Activated naive CD4-positive, alpha-beta T cell treated with anti-CD3 and anti-CD28 coated beads for 36 hours (primary cell): ENCODE measurements at regions of chr4 and their contacts with region 1.

Region 1: GRCh38 chr4:83334425-83335241 is at the start of gene HPSE:
- DNase-seq: peak; percentile 81
- H3K4me3 Mint-ChIP-seq: peak within 1 kb of the TSS; percentile 84
- H3K27ac Mint-ChIP-seq: peak within 1 kb of the TSS; percentile 51
- H3K4me1 Mint-ChIP-seq: peaks cover 16% of the 10 kb centered on the region
- H3K27me3 Mint-ChIP-seq: peaks cover under 1% of the 10 kb centered on the region
- total RNA-seq, gene HPSE: 13.5 to 16.1 TPM

Region 2: GRCh38 chr4:83212041-83212851 is 122.4 kb before region 1 on chr4:
- CTCF ChIA-PET with region 1: no interaction called
- intact Hi-C with region 1: loop called (anchors 1 kb)
- DNase-seq: peak; percentile 72
- H3K4me3 Mint-ChIP-seq: no peak overlapping the region
- H3K27ac Mint-ChIP-seq: peak overlapping the region; percentile 65
- H3K4me1 Mint-ChIP-seq: peaks cover 54% of the 10 kb centered on the region
- H3K27me3 Mint-ChIP-seq: no peaks in the 10 kb centered on the region

Region 3: DNA sequence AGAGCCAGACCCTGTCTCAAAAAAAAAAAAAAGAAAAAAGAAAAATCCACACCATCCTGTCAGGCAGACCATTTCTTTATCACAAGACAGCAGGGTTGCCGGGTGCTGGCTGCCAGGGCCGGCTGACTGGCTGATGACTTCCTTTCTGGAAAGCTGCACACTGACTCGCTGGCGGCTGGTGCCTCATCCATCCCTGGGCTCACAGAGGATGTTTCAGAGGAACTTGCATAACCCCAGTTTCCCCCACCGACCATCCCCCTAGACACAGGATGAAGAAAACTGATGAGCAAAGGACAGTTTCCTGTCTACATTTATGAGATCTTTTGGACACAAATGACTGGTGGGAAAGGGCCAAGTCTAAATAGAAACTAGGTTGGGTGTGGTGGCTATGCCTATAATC is 14.1 kb before region 1 on chr4:
- CTCF ChIA-PET with region 1: no interaction called
- intact Hi-C with region 1: loop called (anchors 1 kb)
- DNase-seq: peak; percentile 68
- H3K4me3 Mint-ChIP-seq: no peak overlapping the region
- H3K27ac Mint-ChIP-seq: peak overlapping the region; percentile 10
- H3K4me1 Mint-ChIP-seq: peaks cover 6% of the 10 kb centered on the region
- H3K27me3 Mint-ChIP-seq: no peaks in the 10 kb centered on the region

Region 4: GRCh38 chr4:83348074-83348473 is 13.4 kb after region 1 on chr4:
- CTCF ChIA-PET with region 1: no interaction called
- intact Hi-C with region 1: loop called (anchors 1 kb)
- DNase-seq: no peak
- H3K4me3 Mint-ChIP-seq: no peak overlapping the region
- H3K27ac Mint-ChIP-seq: no peak overlapping the region
- H3K4me1 Mint-ChIP-seq: peaks cover 20% of the 10 kb centered on the region
- H3K27me3 Mint-ChIP-seq: no peaks in the 10 kb centered on the region

Region 5: GRCh38 chr4:83387753-83388676 is 53.4 kb after region 1 on chr4:
- CTCF ChIA-PET with region 1: no interaction called
- intact Hi-C with region 1: loop called (anchors 2 kb)
- DNase-seq: peak; percentile 52
- H3K4me3 Mint-ChIP-seq: no peak overlapping the region
- H3K27ac Mint-ChIP-seq: no peak overlapping the region
- H3K4me1 Mint-ChIP-seq: peaks cover 8% of the 10 kb centered on the region
- H3K27me3 Mint-ChIP-seq: no peaks in the 10 kb centered on the region